ENCODE measurements at regions of chr6 and their contacts with region 1.

Region 1: GRCh38 chr6:166691199-166691598 is 64.1 kb upstream of the RPS6KA2 start:
- DNase-seq: peak; percentile 88
- H3K4me3 ChIP-seq: no peak overlapping the region
- H3K27ac ChIP-seq: peak overlapping the region; percentile 68
- H3K4me1 ChIP-seq: peaks cover 20% of the 10 kb centered on the region
- H3K27me3 ChIP-seq: no peaks in the 10 kb centered on the region
- CTCF ChIP-seq: no peak
- POLR2A ChIP-seq: no peak

Region 2: GRCh38 chr6:166640342-166641043 is 50.7 kb before region 1 on chr6:
- CTCF ChIA-PET with region 1: interaction called, 9 read pairs
- POLR2A ChIA-PET with region 1: interaction called, 3 read pairs
- dilution Hi-C with region 1: no loop called
- intact Hi-C with region 1: loop called (anchors 1 kb)
- DNase-seq: peak; percentile 76
- H3K4me3 ChIP-seq: peak overlapping the region in 1 of 3 experiments; percentile 21
- H3K27ac ChIP-seq: peak overlapping the region; percentile 59
- H3K4me1 ChIP-seq: peaks cover 34% of the 10 kb centered on the region
- H3K27me3 ChIP-seq: no peaks in the 10 kb centered on the region
- CTCF ChIP-seq: peak in 1 of 2 donors; percentile 13
- POLR2A ChIP-seq: no peak

Region 3: GRCh38 chr6:166736634-166737033 is 45.4 kb after region 1 on chr6:
- CTCF ChIA-PET with region 1: no interaction called
- POLR2A ChIA-PET with region 1: interaction called, 3 read pairs
- dilution Hi-C with region 1: no loop called
- intact Hi-C with region 1: loop called (anchors 1 kb)
- DNase-seq: peak; percentile 89
- H3K4me3 ChIP-seq: no peak overlapping the region
- H3K27ac ChIP-seq: peak overlapping the region; percentile 66
- H3K4me1 ChIP-seq: peaks cover 10% of the 10 kb centered on the region
- H3K27me3 ChIP-seq: no peaks in the 10 kb centered on the region
- CTCF ChIP-seq: no peak
- POLR2A ChIP-seq: no peak